PC-9 (cell line): ENCODE measurements at regions of chr12 and their contacts with region 1.

Region 1: GRCh38 chr12:13941258-13942249 is 39.8 kb downstream of the GRIN2B start:
- DNase-seq: peak; percentile 53 to 68
- H3K4me3 ChIP-seq: no peak overlapping the region
- H3K27ac ChIP-seq: no peak overlapping the region
- H3K4me1 ChIP-seq: no peaks in the 10 kb centered on the region; the same call in 1 of the 2 replicates
- H3K27me3 ChIP-seq: no peaks in the 10 kb centered on the region
- CTCF ChIP-seq: peak; percentile 61

Region 2: DNA sequence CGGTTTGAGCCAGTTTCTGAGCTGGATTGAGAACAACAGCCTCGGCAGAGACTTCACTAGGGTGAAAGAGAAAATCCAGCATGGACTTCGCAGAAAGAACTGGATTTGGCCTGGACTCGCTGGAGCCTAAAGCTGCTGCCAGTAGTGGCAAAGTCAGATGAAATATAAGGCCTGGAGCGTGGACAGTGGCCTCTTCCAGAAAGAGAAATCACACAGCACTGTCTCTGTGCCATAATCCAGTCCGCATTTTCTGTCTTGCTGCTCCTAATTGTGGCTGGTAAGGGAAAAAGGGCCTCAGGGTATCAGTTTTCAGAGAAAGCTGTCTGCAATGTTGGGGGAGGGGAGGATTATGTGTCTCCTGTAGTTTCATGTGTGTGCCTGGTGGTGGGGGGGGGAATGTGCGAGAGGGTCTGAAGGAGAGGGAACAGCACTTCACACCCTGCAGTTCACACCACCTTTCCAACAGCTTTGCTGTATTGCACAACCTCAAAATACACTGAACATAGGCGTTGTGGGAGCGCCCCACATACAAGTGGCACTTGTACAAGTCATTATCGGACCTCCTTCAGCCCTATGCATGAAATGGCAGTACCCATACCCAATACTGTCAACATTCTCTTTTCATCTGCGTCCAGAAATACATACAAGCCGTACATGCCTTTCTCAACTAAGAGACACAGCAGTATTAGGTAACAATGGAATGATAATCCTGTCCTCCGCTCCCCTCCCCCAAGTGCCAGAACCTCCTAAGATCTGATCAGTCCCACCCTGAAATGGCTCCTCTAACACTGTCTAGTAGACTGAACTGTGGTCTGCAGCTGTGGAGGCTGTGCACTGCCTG is 316.4 kb after region 1 on chr12:
- CTCF ChIA-PET with region 1: no interaction called
- POLR2A ChIA-PET with region 1: no interaction called
- intact Hi-C with region 1: no loop called
- DNase-seq: peak; percentile 86 to 95
- H3K4me3 ChIP-seq: no peak overlapping the region
- H3K27ac ChIP-seq: peak overlapping the region; percentile 93
- H3K4me1 ChIP-seq: peaks cover 40% of the 10 kb centered on the region
- H3K27me3 ChIP-seq: no peaks in the 10 kb centered on the region
- CTCF ChIP-seq: no peak

Region 3: GRCh38 chr12:14554281-14555007 is 612.9 kb after region 1 on chr12:
- CTCF ChIA-PET with region 1: interaction called, 13 read pairs
- POLR2A ChIA-PET with region 1: no interaction called
- intact Hi-C with region 1: no loop called
- DNase-seq: peak; percentile 69 to 86
- H3K4me3 ChIP-seq: no peak overlapping the region
- H3K27ac ChIP-seq: 0 out of 2 replicates have a peak overlapping the region, but pooled peaks have one; percentile 14
- H3K4me1 ChIP-seq: peaks cover 13% of the 10 kb centered on the region
- H3K27me3 ChIP-seq: no peaks in the 10 kb centered on the region
- CTCF ChIP-seq: no peak